CD8-positive, alpha-beta T cell (primary cell): ENCODE measurements at regions of chr1 and their contacts with region 1.

Region 1: DNA sequence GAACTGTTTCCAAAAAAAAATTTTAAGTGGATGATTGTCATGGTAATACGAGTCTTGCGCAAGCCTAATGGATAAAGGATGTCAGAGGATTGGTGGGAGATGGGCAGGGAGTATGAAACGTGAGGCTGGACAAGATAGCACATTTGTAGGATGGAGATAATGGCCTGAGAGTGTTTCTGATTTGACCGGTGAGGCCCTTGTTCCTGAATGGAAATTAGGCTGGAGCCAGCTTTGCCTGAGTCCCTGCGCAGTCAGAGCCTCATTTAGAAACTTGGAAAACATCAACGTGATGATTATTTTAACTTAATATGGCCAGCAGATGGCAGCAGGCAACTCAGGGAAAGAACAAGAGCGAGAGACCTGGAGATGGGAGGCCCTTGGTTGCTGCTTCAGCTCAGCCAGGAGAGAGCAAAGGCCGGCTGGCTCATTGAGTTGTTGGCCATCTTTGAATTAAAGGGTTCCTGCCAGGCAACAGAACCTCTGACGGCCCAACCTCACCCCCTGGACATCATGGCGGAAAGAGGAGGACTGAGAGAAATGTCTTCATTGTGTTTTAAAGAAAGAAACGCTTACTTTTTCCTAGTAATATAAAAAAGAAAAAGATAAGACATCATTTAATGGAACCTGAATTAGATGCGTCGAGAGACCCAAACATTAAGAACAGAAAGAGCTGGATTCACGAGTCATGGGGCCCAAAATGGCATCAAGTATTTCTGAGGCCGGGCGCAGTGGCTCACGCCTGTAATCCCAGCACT is 80.3 kb downstream of the SELENOF start:
- DNase-seq: peak; percentile 4 to 76 (median 53)
- ATAC-seq: peak; percentile 72
- H3K4me3 ChIP-seq: no peak overlapping the region
- H3K4me3 Mint-ChIP-seq: no peak overlapping the region
- H3K27ac ChIP-seq: no peak overlapping the region
- H3K27ac Mint-ChIP-seq: no peak overlapping the region
- H3K4me1 ChIP-seq: no peaks in the 10 kb centered on the region
- H3K4me1 Mint-ChIP-seq: peaks cover 4% of the 10 kb centered on the region
- H3K27me3 ChIP-seq: no peaks in the 10 kb centered on the region
- H3K27me3 Mint-ChIP-seq: no peaks in the 10 kb centered on the region
- CTCF ChIP-seq: peak; percentile 64

Region 2: GRCh38 chr1:86779308-86780191 is 54.1 kb before region 1 on chr1:
- CTCF ChIA-PET with region 1: no interaction called
- POLR2A ChIA-PET with region 1: no interaction called
- intact Hi-C with region 1: no loop called
- DNase-seq: no peak
- ATAC-seq: no peak
- H3K4me3 ChIP-seq: no peak overlapping the region
- H3K4me3 Mint-ChIP-seq: no peak overlapping the region
- H3K27ac ChIP-seq: no peak overlapping the region
- H3K27ac Mint-ChIP-seq: no peak overlapping the region
- H3K4me1 ChIP-seq: no peaks in the 10 kb centered on the region
- H3K4me1 Mint-ChIP-seq: no peaks in the 10 kb centered on the region
- H3K27me3 ChIP-seq: no peaks in the 10 kb centered on the region
- H3K27me3 Mint-ChIP-seq: no peaks in the 10 kb centered on the region
- CTCF ChIP-seq: no peak

Region 3: DNA sequence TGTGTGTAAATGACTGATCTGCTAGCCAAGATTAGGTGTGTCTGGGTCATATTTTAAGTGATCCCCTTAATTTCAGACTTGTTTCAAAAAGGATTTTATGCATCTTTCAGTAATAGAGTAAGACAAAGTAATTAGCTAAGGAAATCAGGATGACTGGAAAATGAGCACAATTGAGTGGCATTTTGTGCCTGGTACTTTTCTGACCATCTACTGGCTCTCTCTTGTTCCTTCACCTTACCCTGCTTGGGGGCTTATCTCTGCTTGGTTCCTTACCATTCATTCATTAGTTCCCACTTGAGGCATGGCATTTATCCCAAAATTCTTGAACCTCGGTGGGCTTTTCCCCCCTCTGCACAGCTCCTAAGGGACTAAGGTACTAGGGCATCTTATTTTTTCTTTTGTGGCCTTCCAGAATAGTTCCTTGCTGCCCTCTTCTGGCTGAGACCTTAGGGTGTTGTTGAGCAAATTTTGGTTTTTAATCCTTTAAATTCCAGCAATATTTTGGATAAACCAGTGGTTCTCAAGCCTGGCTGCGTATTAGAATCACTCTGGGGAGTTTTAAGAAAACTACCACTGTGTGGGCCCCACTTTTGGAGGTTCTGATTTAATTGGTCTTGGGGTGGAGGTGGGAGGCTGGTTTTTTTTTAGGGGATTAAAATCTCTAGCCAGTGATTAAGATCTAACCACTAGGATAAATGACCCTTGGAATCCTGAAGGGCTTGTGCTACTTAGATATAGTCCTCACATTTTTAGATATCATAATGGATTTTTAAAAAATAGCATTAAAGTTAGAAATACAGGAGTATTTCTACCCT is 131.6 kb after region 1 on chr1:
- CTCF ChIA-PET with region 1: interaction called, 72 read pairs
- POLR2A ChIA-PET with region 1: no interaction called
- intact Hi-C with region 1: loop called (anchors 1 kb)
- DNase-seq: peak in 4 of 9 experiments; percentile 13 to 53 (median 31)
- ATAC-seq: no peak
- H3K4me3 ChIP-seq: no peak overlapping the region
- H3K4me3 Mint-ChIP-seq: no peak overlapping the region
- H3K27ac ChIP-seq: no peak overlapping the region
- H3K27ac Mint-ChIP-seq: no peak overlapping the region
- H3K4me1 ChIP-seq: no peaks in the 10 kb centered on the region
- H3K4me1 Mint-ChIP-seq: no peaks in the 10 kb centered on the region
- H3K27me3 ChIP-seq: no peaks in the 10 kb centered on the region
- H3K27me3 Mint-ChIP-seq: no peaks in the 10 kb centered on the region
- CTCF ChIP-seq: peak; percentile 52

Region 4: GRCh38 chr1:87024936-87025540 is 191.4 kb after region 1 on chr1:
- CTCF ChIA-PET with region 1: no interaction called
- POLR2A ChIA-PET with region 1: no interaction called
- intact Hi-C with region 1: loop called in 1 of 2 experiments (anchors 1 kb)
- DNase-seq: peak in 2 of 9 experiments; percentile 6 to 28
- ATAC-seq: no peak
- H3K4me3 ChIP-seq: no peak overlapping the region
- H3K4me3 Mint-ChIP-seq: no peak overlapping the region
- H3K27ac ChIP-seq: no peak overlapping the region
- H3K27ac Mint-ChIP-seq: no peak overlapping the region
- H3K4me1 ChIP-seq: no peaks in the 10 kb centered on the region
- H3K4me1 Mint-ChIP-seq: peaks cover 2% of the 10 kb centered on the region
- H3K27me3 ChIP-seq: no peaks in the 10 kb centered on the region
- H3K27me3 Mint-ChIP-seq: no peaks in the 10 kb centered on the region
- CTCF ChIP-seq: no peak